T-cell (primary cell): ENCODE measurements at regions of chr7 and their contacts with region 1.

Region 1: DNA sequence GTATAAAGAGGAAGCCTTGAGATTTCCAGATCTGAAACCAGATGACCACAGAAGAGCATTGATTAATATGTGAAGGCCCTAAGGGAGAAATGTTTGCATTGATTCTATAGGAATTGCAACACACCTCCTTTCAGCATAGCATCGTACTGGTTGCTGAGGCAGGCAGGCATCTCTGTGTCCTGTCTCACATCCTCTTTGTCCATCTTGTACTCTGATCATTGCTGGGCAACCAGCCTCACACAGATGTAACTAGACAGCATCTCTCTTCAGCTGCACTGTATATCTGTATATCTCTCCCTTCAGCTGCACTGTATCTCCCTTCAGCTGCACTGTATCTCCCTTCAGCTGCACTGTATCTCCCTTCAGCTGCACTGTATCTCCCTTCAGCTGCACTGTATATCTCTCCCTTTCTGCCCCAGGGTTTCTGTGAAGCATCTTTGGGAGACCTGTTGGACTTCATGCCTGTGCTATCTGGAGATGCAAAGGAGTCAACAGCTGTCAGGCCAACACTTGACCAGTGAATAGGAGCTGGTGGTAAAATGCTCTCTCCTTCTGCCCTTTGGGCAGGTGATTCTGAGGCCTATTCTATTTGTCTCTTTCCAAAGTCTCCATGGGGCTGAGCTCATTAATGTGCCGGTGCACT is 40.3 kb downstream of the TMEM178B start:
- DNase-seq: no peak
- ATAC-seq: peak in 1 of 4 experiments; percentile 15
- H3K4me3 ChIP-seq: no peak overlapping the region
- H3K4me3 Mint-ChIP-seq: no peak overlapping the region
- H3K27ac ChIP-seq: no peak overlapping the region
- H3K27ac Mint-ChIP-seq: no peak overlapping the region
- H3K4me1 ChIP-seq: no peaks in the 10 kb centered on the region
- H3K4me1 Mint-ChIP-seq: no peaks in the 10 kb centered on the region
- H3K27me3 ChIP-seq: peaks cover 0 to 3% of the 10 kb centered on the region in 2 experiments
- H3K27me3 Mint-ChIP-seq: peaks cover 8 to 22% of the 10 kb centered on the region in 2 donors

Region 2: DNA sequence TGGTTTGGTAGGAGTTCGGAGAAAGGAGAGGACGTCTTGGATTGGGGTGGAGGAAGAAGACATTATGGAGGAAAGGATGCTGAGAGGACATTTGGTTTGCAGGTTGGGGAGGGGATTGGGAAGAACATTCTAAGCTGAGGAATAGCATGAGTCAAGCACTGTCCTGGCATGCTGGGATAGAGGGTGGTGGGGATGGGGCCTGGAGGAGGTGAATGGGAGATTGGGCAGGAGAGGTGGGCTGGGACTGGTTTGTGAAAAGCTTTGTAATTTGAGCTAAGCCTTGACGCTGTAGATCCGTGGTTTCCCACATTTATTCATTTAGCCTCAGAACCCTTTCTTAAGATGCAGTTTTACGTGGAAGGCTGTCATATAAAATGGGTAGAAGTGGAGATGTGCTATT is 12.0 kb after region 1 on chr7:
- CTCF ChIA-PET with region 1: no interaction called
- POLR2A ChIA-PET with region 1: interaction called in 1 of 2 experiments, 14 read pairs
- DNase-seq: no peak
- ATAC-seq: no peak
- H3K4me3 ChIP-seq: no peak overlapping the region
- H3K4me3 Mint-ChIP-seq: no peak overlapping the region
- H3K27ac ChIP-seq: no peak overlapping the region
- H3K27ac Mint-ChIP-seq: no peak overlapping the region
- H3K4me1 ChIP-seq: no peaks in the 10 kb centered on the region
- H3K4me1 Mint-ChIP-seq: no peaks in the 10 kb centered on the region
- H3K27me3 ChIP-seq: peaks cover 0 to 4% of the 10 kb centered on the region in 2 experiments
- H3K27me3 Mint-ChIP-seq: peaks cover 23 to 38% of the 10 kb centered on the region in 2 donors

Region 3: GRCh38 chr7:141151746-141152145 is 37.6 kb after region 1 on chr7:
- CTCF ChIA-PET with region 1: no interaction called
- POLR2A ChIA-PET with region 1: no interaction called
- DNase-seq: no peak
- ATAC-seq: no peak
- H3K4me3 ChIP-seq: no peak overlapping the region
- H3K4me3 Mint-ChIP-seq: no peak overlapping the region
- H3K27ac ChIP-seq: no peak overlapping the region
- H3K27ac Mint-ChIP-seq: no peak overlapping the region
- H3K4me1 ChIP-seq: no peaks in the 10 kb centered on the region
- H3K4me1 Mint-ChIP-seq: no peaks in the 10 kb centered on the region
- H3K27me3 ChIP-seq: peaks cover 0 to 16% of the 10 kb centered on the region in 2 experiments
- H3K27me3 Mint-ChIP-seq: no peaks in the 10 kb centered on the region